Psoas muscle (tissue), 8 donors: ENCODE measurements at regions of chr6 and their contacts with region 1.

Region 1: GRCh38 chr6:71766146-71766760 is 120.1 kb upstream of the RIMS1 start:
- DNase-seq: no peak
- ATAC-seq: no peak
- H3K4me3 ChIP-seq: no peak overlapping the region
- H3K27ac ChIP-seq: no peak overlapping the region
- H3K4me1 ChIP-seq: peaks cover 6% of the 10 kb centered on the region
- H3K27me3 ChIP-seq: no peaks in the 10 kb centered on the region
- CTCF ChIP-seq: no peak

Region 2: GRCh38 chr6:71544028-71544427 is 222.2 kb before region 1 on chr6:
- intact Hi-C with region 1: loop called in 1 of 2 experiments (anchors 10 kb)
- DNase-seq: no peak
- ATAC-seq: no peak
- H3K4me3 ChIP-seq: no peak overlapping the region
- H3K27ac ChIP-seq: no peak overlapping the region
- H3K4me1 ChIP-seq: no peaks in the 10 kb centered on the region
- H3K27me3 ChIP-seq: no peaks in the 10 kb centered on the region
- CTCF ChIP-seq: no peak

Region 3: GRCh38 chr6:71579902-71580301 is 186.4 kb before region 1 on chr6:
- intact Hi-C with region 1: no loop called
- DNase-seq: no peak
- ATAC-seq: no peak
- H3K4me3 ChIP-seq: no peak overlapping the region
- H3K27ac ChIP-seq: no peak overlapping the region
- H3K4me1 ChIP-seq: no peaks in the 10 kb centered on the region
- H3K27me3 ChIP-seq: no peaks in the 10 kb centered on the region
- CTCF ChIP-seq: no peak

Region 4: DNA sequence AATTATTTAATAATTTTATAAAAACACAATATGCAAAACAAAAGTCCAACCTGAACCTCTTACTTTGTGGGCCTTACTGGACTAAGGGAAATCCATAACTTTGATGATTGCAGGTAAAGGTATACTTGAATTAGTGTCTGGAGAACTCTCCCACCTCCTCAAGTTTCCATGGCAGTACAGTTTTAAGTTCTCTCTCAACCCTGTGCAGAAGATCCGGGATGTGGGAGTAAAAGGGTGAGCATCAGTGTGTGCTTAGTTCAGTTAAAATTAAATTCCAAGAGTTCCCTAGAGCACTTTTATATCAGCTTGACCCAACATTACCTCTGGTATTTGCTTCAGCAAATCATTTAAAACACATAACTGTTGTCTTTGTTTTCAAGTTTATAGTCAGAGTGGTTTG is 167.6 kb after region 1 on chr6:
- intact Hi-C with region 1: no loop called
- DNase-seq: no peak
- ATAC-seq: no peak
- H3K4me3 ChIP-seq: no peak overlapping the region
- H3K27ac ChIP-seq: no peak overlapping the region
- H3K4me1 ChIP-seq: no peaks in the 10 kb centered on the region
- H3K27me3 ChIP-seq: no peaks in the 10 kb centered on the region
- CTCF ChIP-seq: no peak

Region 5: DNA sequence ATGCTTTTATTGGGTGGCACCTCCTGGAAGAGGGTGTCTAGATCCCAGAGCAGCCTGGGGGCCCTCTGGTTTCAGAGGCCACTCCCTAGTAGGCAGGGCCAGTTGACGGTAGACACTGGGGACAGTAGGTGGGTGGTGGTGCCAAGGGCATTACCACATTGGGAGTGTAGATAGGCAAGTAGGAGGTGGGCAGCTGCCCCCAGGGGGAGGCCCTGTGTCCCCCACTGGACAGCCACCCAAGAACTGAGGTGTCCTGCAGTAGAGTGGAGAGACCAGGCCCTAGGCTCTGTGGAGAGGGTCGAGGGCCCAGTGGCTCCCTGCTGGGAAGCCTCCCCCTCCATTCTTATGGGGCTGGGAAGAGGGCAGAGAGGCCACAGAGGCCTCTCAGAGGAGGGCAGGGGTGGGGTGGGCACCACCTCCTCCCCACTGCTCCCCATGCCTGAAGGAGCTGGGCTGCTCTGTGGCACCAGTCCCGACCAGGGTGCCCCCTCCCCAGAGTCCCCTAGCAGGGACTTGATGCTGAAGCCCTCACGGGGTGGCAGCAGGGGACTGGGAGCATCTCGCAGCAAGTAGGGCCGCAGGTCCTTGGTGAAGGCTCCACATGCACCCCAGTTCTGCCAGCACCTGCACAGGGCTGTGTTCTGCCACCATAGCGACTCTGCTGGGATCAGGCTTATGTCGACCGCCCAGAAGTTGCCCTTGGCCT is 550.6 kb after region 1 on chr6:
- intact Hi-C with region 1: no loop called
- DNase-seq: peak in 1 of 2 donors; percentile 39
- ATAC-seq: no peak
- H3K4me3 ChIP-seq: no peak overlapping the region
- H3K27ac ChIP-seq: no peak overlapping the region
- H3K4me1 ChIP-seq: no peaks in the 10 kb centered on the region
- H3K27me3 ChIP-seq: no peaks in the 10 kb centered on the region
- CTCF ChIP-seq: no peak